HepG2 (cell line): ENCODE measurements at regions of chr6 and their contacts with region 1.

Region 1: DNA sequence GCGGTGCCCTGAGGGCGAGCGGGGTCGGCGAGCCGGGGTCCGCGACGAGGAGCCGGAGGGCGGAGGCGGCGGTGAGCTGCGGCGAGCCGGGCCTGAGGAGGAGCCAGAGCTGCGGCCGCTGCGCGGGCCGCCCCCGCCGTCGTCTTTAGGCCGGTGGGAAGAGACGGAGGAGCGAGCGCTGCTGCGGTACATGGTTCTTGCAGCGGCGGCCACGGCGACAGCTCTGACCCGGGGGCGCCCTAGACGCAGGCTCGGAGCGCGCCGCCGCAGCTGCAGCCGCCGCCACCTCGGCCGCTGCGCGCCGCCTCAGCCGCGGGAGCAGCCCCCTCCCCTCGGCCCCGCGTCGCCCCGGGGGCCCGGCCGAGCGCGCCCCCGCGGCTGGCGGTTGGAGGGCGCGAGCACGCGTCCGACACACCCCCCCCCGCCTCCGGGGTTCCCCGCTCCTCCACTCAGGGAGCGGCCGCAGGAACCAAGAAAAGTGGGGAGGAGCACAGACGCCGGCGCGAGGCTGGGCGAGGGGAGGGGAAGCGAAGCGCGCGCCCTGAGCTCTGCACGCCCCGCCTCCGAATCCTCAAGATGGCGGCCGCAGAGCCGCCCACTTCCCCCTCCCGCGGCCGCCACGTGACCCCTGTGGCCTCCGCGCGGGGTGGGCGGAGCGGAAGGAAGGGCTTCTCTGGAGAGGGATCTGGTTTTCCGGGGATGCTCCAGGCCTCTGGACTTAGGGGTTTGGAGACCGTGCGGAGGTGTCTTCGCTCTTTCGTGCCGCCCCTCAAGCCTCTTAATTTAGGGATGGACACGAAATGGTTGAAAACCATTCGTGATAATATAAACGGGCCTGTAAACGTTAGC is at the start of gene ZNF318:
- DNase-seq: peak; percentile 93
- ATAC-seq: peak; percentile 89
- H3K4me3 ChIP-seq: peak within 1 kb of the TSS; percentile 60 to 81 (median 66)
- H3K27ac ChIP-seq: peak within 1 kb of the TSS; percentile 65
- H3K4me1 ChIP-seq: peaks cover 38% of the 10 kb centered on the region
- H3K27me3 ChIP-seq: no peaks in the 10 kb centered on the region
- CTCF ChIP-seq: 0 out of 2 replicates have a peak, but pooled peaks have one; percentile 6
- EP300 ChIP-seq: no peak
- POLR2A ChIP-seq: peak in 1 of 2 experiments; percentile 59; a peak in 3 of 4 replicates
- RAD21 ChIP-seq: peak; percentile 53; the same call in 1 of the 2 replicates
- total RNA-seq, gene ZNF318: 13.0 and 19.4 TPM in 2 replicates

Region 2: DNA sequence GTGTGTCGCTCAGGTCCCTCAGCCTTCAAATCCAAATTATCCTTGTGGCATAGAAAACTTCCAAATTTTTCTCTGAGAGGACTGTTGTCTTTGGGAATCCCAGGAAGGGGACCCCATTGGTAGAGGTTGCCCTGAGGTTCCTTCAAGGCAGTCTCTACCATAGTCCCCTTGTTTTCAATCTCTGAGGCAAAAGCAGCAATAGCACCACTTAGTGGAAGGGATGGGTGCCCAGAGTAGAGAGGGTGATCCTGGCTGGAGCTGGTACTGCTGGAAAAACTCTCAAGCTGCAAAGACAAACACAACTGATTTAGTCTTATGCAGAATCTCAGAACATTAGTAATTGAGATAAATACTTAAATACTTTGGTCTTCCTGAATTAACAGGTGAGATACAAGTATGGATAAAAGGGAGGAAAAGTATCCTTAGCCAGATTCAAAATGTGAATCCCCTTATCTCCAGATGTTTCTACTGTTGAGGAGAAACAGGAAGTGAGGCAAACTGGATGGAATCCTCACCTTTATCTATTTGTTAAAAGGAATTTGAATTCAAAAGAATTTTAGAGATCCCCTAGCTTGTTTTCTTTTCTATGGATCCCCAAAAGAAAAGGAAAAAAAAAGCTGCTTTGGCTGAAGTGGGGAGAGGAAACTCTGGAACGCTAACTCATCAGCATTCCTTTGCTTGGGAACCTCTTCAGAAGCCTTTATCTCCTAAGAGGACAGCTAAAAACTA is 13.4 kb before region 1 on chr6:
- CTCF ChIA-PET with region 1: no interaction called
- POLR2A ChIA-PET with region 1: interaction called, 17 read pairs
- in situ Hi-C with region 1: no loop called
- intact Hi-C with region 1: no loop called
- DNase-seq: peak; percentile 64
- ATAC-seq: peak; percentile 99
- H3K4me3 ChIP-seq: no peak overlapping the region
- H3K27ac ChIP-seq: no peak overlapping the region
- H3K4me1 ChIP-seq: peaks cover 2% of the 10 kb centered on the region
- H3K27me3 ChIP-seq: no peaks in the 10 kb centered on the region
- CTCF ChIP-seq: peak; percentile 91
- EP300 ChIP-seq: no peak
- POLR2A ChIP-seq: no peak
- RAD21 ChIP-seq: peak; percentile 86

Region 3: GRCh38 chr6:43427406-43428111 is 58.2 kb after region 1 on chr6 and contains the start of gene ABCC10:
- CTCF ChIA-PET with region 1: no interaction called
- POLR2A ChIA-PET with region 1: interaction called, 9 read pairs
- in situ Hi-C with region 1: no loop called
- intact Hi-C with region 1: loop called (anchors 1 kb)
- DNase-seq: peak; percentile 93
- ATAC-seq: peak; percentile 97
- H3K4me3 ChIP-seq: peak within 1 kb of the TSS; percentile 84 to 93 (median 91)
- H3K27ac ChIP-seq: peak within 1 kb of the TSS; percentile 74
- H3K4me1 ChIP-seq: peaks cover 34% of the 10 kb centered on the region
- H3K27me3 ChIP-seq: no peaks in the 10 kb centered on the region; a peak in 1 of 5 replicates
- CTCF ChIP-seq: peak; percentile 74
- EP300 ChIP-seq: no peak
- POLR2A ChIP-seq: peak; percentile 88 to 93
- RAD21 ChIP-seq: peak; percentile 29; the same call in 1 of the 2 replicates
- total RNA-seq, gene ABCC10: 11.2 and 24.3 TPM in 2 replicates

Region 4: DNA sequence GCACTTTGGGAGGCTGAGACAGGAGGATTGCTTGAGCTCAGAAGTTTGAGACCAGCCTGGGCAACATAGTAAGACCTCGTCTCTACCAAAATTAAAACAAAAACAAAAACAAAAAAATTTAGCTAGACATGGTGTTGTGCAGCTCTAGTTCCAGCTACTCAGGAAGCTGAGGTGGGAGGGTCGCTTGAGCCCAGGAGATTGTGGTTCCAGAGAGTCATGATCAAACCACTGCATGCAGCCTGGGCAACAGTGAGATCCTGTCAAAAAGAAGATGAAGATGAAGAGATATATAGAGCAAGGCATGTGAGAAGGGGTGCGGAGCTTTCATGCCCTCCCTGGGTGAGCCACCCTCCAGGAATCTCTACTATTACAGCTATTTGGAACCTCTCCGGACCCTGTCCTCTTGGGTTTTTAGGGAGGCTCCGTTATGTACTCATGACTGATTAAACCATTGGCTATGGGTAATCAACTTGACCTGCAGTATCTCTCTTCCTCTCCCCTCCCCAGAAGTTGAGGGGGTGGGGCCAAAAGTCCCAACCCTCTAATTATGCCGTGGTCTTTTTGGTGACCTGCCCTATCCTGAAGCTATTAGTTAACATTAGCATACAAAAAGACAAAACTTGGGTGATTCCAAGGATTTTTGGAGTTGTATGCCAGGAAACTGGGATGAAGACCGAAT is 215.6 kb after region 1 on chr6:
- CTCF ChIA-PET with region 1: no interaction called
- POLR2A ChIA-PET with region 1: no interaction called
- in situ Hi-C with region 1: no loop called
- intact Hi-C with region 1: no loop called
- DNase-seq: no peak
- ATAC-seq: no peak
- H3K4me3 ChIP-seq: no peak overlapping the region
- H3K27ac ChIP-seq: no peak overlapping the region
- H3K4me1 ChIP-seq: no peaks in the 10 kb centered on the region
- H3K27me3 ChIP-seq: no peaks in the 10 kb centered on the region
- CTCF ChIP-seq: no peak
- EP300 ChIP-seq: no peak
- POLR2A ChIP-seq: no peak
- RAD21 ChIP-seq: no peak

Region 5: GRCh38 chr6:43621429-43622180 is 252.2 kb after region 1 on chr6:
- CTCF ChIA-PET with region 1: no interaction called
- POLR2A ChIA-PET with region 1: no interaction called
- in situ Hi-C with region 1: no loop called
- intact Hi-C with region 1: no loop called
- DNase-seq: no peak
- ATAC-seq: no peak
- H3K4me3 ChIP-seq: no peak overlapping the region
- H3K27ac ChIP-seq: no peak overlapping the region
- H3K4me1 ChIP-seq: peaks cover 14% of the 10 kb centered on the region
- H3K27me3 ChIP-seq: no peaks in the 10 kb centered on the region
- CTCF ChIP-seq: no peak
- EP300 ChIP-seq: no peak
- POLR2A ChIP-seq: peak in 1 of 2 experiments; percentile 22; a peak in 2 of 4 replicates
- RAD21 ChIP-seq: no peak